PC-9 (cell line): ENCODE measurements at regions of chr4 and their contacts with region 1.

Region 1: GRCh38 chr4:56757821-56758411 is 63.6 kb downstream of the SPINK2 start:
- DNase-seq: peak; percentile 83 to 89
- H3K4me3 ChIP-seq: peak overlapping the region; percentile 47; the same call in 1 of the 2 replicates
- H3K27ac ChIP-seq: peak overlapping the region; percentile 93
- H3K4me1 ChIP-seq: peaks cover 43% of the 10 kb centered on the region
- H3K27me3 ChIP-seq: no peaks in the 10 kb centered on the region
- CTCF ChIP-seq: no peak

Region 2: DNA sequence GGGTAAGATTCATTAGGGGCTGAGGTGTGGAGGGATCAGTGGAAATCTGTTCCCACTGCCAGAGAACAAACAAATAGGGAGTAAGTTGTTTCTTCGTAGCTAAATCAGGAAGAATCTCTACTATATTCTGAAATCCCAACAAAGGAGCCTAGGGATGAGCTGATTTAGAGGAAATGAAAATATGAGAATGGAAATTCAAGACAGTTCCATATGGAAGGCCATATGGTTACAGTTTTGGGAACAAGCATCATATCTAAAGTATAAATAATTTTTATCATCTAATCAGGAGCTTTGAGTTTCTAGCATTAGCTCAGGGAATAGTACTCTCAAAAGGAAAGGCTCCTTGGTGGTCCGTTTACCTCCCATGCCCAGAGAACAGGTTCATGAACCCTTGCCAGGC is 588.9 kb before region 1 on chr4:
- CTCF ChIA-PET with region 1: no interaction called
- POLR2A ChIA-PET with region 1: no interaction called
- intact Hi-C with region 1: no loop called
- DNase-seq: no peak
- H3K4me3 ChIP-seq: no peak overlapping the region
- H3K27ac ChIP-seq: no peak overlapping the region
- H3K4me1 ChIP-seq: no peaks in the 10 kb centered on the region
- H3K27me3 ChIP-seq: no peaks in the 10 kb centered on the region
- CTCF ChIP-seq: no peak

Region 3: DNA sequence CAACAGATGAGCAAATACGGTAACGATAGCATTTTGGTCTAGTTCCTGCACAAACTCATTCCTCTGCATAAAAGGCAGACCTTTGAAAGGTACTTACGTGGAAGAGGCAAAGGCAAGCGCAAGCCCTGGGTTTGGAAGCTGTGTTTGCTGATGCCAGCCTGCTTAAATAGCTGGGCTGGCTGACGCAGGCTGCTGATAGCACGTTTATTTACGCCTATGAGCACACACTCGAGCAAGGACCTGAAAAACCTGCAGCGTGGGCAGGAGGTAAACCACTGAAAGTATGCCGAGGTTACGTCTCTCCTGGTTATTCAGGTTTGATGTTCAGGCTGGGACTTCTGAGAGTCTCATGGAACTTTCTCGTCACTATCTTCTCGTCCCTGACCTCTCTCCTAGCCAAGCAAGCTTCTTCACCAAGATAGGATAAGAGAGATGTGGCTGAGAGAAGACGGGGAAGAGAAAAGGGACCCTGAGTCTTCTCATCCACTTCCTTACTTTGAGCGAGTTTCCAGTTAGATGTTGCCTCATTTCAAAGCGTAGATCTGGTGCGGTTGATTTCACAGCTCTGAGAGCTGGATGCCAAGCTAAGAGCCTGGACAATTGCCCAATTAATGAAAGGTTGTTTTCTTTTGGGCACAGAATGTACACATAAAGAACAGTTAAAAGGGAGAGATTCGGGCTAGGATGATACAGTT is 76.6 kb before region 1 on chr4 and contains the start of gene HOPX:
- CTCF ChIA-PET with region 1: no interaction called
- POLR2A ChIA-PET with region 1: no interaction called
- intact Hi-C with region 1: loop called (anchors 5 kb)
- DNase-seq: peak; percentile 59 to 92
- H3K4me3 ChIP-seq: peak within 1 kb of the TSS; percentile 50; the same call in 1 of the 2 replicates
- H3K27ac ChIP-seq: peak within 1 kb of the TSS; percentile 90
- H3K4me1 ChIP-seq: peaks cover 25% of the 10 kb centered on the region
- H3K27me3 ChIP-seq: no peaks in the 10 kb centered on the region
- CTCF ChIP-seq: no peak
- total RNA-seq, gene HOPX: 0.98 and 1.0 TPM in 2 replicates